ENCODE measurements at regions of chr4 and their contacts with region 1.

Region 1: GRCh38 chr4:157994895-157995294 is 177.9 kb downstream of the GASK1B start:
- DNase-seq: no peak
- H3K4me3 ChIP-seq: no peak overlapping the region
- H3K27ac ChIP-seq: peak overlapping the region; percentile 46 to 92
- H3K4me1 ChIP-seq: no peaks in the 10 kb centered on the region
- H3K27me3 ChIP-seq: no peaks in the 10 kb centered on the region
- CTCF ChIP-seq: no peak
- POLR2A ChIP-seq: no peak

Region 2: GRCh38 chr4:158172261-158173258 is 177.7 kb after region 1 on chr4 and contains the start of gene GASK1B:
- intact Hi-C with region 1: loop called (anchors 5 kb)
- DNase-seq: peak; percentile 38 to 67
- H3K4me3 ChIP-seq: peak within 1 kb of the TSS; percentile 47 to 60
- H3K27ac ChIP-seq: peak within 1 kb of the TSS; percentile 90 to 97
- H3K4me1 ChIP-seq: peaks cover 0 to 7% of the 10 kb centered on the region in 2 donors
- H3K27me3 ChIP-seq: no peaks in the 10 kb centered on the region
- CTCF ChIP-seq: peak; percentile 62 to 76 (median 70)
- POLR2A ChIP-seq: no peak
- total RNA-seq, gene GASK1B: 54.7 to 135 (median 62.7) TPM